OCI-LY7 (cell line): ENCODE measurements at regions of chr4 and their contacts with region 1.

Region 1: DNA sequence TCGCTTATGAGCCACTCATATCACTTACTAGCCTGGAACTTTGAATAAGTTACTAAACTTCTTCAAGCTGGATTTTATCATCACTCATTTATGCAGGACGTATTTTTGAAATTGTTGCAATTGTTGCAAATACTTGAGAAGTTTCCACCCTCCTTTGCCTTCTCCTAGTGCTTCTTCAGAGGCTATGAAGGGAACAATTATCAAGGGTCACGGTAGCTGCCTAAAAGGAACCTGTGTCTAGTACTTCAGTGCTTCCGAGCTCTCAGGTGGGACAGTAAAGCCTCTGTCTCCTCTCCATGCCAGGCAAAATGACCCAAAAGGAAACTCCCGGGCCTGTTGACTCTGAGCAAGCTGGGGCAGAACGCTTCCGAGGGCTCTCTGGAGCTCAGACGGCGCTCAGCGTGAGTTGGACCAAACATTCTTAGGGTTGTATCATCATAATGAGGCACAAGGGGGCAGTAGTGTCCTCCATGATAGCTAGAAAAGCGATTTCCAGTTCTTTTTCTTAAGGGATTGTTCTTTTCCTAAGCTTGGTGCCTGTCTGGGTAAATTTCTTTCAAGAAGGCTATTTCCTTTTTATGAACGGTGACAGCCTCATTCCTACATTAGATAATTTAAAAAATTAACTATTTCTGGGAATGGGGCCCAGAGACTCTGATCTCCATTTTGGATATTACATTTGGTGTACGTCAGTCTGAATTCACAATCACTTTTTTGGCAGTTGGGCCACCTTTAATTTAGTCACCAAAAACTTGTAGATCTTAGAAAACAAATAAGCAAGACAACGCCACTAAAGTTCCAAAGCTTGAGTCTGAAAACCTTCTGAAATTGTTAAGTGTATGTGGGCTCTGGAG is 73.1 kb downstream of the PACRGL start:
- DNase-seq: peak; percentile 43
- H3K4me3 ChIP-seq: no peak overlapping the region
- H3K27ac ChIP-seq: no peak overlapping the region
- H3K4me1 ChIP-seq: no peaks in the 10 kb centered on the region
- CTCF ChIP-seq: peak; percentile 81

Region 2: DNA sequence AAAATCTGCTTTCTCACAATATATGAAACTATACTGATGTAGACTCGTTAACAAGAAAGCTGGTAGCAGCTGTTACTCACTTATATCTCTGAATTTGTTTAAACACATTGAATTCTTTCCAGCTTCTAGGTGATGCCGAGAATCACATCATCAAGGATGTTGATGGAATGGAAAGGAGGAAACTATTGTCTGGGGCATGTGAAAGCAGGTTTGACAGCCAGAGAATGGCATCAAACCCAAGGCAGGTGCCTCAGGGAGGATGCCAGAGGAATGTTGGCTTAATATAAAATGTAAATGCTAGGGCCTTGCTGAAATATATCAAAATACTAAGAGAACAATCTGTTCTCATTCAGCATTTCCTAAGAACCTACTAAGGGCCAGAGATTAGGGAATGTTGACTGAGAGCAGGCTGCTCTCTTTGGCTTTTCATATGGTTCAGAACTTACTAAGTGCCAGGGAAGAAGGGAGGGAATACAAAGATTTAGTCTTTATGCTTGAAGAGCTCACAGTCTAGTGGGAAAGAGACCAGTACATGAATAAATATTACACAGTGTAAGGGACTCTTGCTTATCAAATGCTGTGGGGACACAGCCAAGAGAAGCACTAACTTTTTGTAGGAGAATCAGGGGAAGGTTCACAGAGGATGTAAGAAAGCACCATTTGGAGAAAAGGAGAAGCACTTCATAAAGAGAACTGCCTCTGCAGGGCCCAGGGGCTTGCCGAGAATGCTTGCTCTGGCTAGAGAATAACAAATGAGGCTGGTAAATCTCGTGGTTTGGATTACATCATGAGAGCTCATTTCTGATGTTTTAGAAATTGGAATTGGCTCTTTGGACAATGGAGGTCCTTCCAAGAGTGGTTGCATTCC is 506.9 kb before region 1 on chr4:
- CTCF ChIA-PET with region 1: no interaction called
- POLR2A ChIA-PET with region 1: no interaction called
- intact Hi-C with region 1: no loop called
- DNase-seq: no peak
- H3K4me3 ChIP-seq: no peak overlapping the region
- H3K27ac ChIP-seq: no peak overlapping the region
- H3K4me1 ChIP-seq: no peaks in the 10 kb centered on the region
- CTCF ChIP-seq: no peak

Region 3: GRCh38 chr4:20723019-20723418 is 50.4 kb before region 1 on chr4:
- CTCF ChIA-PET with region 1: no interaction called
- POLR2A ChIA-PET with region 1: no interaction called
- intact Hi-C with region 1: no loop called
- DNase-seq: no peak
- H3K4me3 ChIP-seq: no peak overlapping the region
- H3K27ac ChIP-seq: no peak overlapping the region
- H3K4me1 ChIP-seq: no peaks in the 10 kb centered on the region
- CTCF ChIP-seq: no peak

Region 4: GRCh38 chr4:20825505-20825904 is 52.1 kb after region 1 on chr4:
- CTCF ChIA-PET with region 1: no interaction called
- POLR2A ChIA-PET with region 1: no interaction called
- intact Hi-C with region 1: no loop called
- DNase-seq: no peak
- H3K4me3 ChIP-seq: no peak overlapping the region
- H3K27ac ChIP-seq: no peak overlapping the region
- H3K4me1 ChIP-seq: no peaks in the 10 kb centered on the region
- CTCF ChIP-seq: no peak

Region 5: GRCh38 chr4:20904966-20905365 is 131.6 kb after region 1 on chr4:
- CTCF ChIA-PET with region 1: no interaction called
- POLR2A ChIA-PET with region 1: no interaction called
- intact Hi-C with region 1: no loop called
- DNase-seq: no peak
- H3K4me3 ChIP-seq: no peak overlapping the region
- H3K27ac ChIP-seq: no peak overlapping the region
- H3K4me1 ChIP-seq: no peaks in the 10 kb centered on the region
- CTCF ChIP-seq: no peak

Region 6: DNA sequence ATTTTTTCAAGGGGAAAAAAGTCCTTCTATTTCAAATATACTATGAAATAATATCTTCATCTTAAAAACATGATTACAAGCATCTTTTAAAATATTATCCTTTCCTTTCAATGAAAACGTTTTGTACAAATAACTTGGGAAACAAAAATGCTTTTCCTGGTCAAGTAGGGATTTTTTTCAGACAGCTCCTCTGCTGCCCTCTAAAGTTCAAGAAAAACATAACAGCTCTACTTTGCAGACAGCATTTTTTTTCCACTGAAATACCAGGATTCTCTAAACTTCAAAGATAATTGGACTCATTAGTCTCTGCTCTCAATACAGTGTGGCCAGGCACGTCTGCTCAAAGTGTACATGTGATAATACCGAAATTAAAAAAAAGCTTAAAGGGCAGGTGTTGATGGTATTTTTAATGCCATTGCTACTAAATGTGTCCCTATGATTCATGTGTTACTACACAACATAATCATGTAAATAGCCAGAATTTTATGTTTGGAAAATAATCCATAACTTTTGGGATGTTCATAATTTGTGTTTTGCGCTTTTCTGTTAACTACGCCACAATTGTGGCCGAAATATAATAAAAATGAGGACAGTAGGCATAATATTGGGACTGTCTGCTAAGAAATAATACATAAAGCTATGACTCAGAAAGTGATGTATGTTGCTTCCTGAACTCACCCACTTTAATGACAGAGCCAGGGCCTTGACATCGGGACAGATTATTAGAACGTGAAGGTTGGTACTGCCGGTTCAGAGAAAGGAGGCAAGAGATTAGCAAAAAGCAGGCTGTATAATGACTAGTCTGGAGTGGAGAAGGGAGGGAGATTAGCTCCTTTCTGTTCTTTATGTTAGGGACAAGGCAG is 696.3 kb after region 1 on chr4:
- CTCF ChIA-PET with region 1: no interaction called
- POLR2A ChIA-PET with region 1: no interaction called
- intact Hi-C with region 1: loop called (anchors 5 kb)
- DNase-seq: peak; percentile 4
- H3K4me3 ChIP-seq: no peak overlapping the region
- H3K27ac ChIP-seq: no peak overlapping the region
- H3K4me1 ChIP-seq: no peaks in the 10 kb centered on the region
- CTCF ChIP-seq: peak; percentile 79